ENCODE measurements at regions of chr6 and their contacts with region 1.

Region 1: GRCh38 chr6:137799950-137800568 is 67.0 kb upstream of the TNFAIP3 start:
- DNase-seq: peak; percentile 40 to 93 (median 72)
- ATAC-seq: peak; percentile 83
- H3K4me3 ChIP-seq: no peak overlapping the region
- H3K4me3 Mint-ChIP-seq: no peak overlapping the region
- H3K27ac ChIP-seq: peak overlapping the region in 1 of 2 experiments; percentile 4
- H3K27ac Mint-ChIP-seq: peak overlapping the region; percentile 56
- H3K4me1 ChIP-seq: peaks cover 47% of the 10 kb centered on the region
- H3K4me1 Mint-ChIP-seq: peaks cover 53% of the 10 kb centered on the region
- H3K27me3 ChIP-seq: no peaks in the 10 kb centered on the region
- H3K27me3 Mint-ChIP-seq: no peaks in the 10 kb centered on the region
- CTCF ChIP-seq: peak; percentile 68

Region 2: DNA sequence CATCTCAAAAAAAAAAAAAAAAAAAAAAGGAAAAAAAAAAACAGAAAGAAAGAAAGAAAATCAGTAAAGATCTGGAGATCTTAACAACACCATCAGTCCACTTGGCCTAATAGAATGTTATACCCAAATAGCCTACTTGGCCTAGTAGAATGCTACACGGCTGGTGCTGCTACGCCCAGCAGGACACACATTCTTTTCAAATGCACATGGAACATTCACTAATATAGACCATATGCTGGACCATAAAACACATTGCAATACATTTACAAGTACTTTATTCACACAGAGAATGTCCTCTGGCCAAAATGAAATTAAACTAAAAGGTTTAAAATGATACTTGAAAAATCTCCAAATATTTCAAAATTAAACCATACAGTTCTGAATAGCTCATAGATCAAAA is 13.0 kb before region 1 on chr6:
- CTCF ChIA-PET with region 1: interaction called, 10 read pairs
- POLR2A ChIA-PET with region 1: interaction called, 3 read pairs
- intact Hi-C with region 1: no loop called
- DNase-seq: no peak
- ATAC-seq: no peak
- H3K4me3 ChIP-seq: no peak overlapping the region
- H3K4me3 Mint-ChIP-seq: no peak overlapping the region
- H3K27ac ChIP-seq: no peak overlapping the region
- H3K27ac Mint-ChIP-seq: no peak overlapping the region
- H3K4me1 ChIP-seq: peaks cover 9% of the 10 kb centered on the region
- H3K4me1 Mint-ChIP-seq: peaks cover 19% of the 10 kb centered on the region
- H3K27me3 ChIP-seq: no peaks in the 10 kb centered on the region
- H3K27me3 Mint-ChIP-seq: no peaks in the 10 kb centered on the region
- CTCF ChIP-seq: no peak

Region 3: GRCh38 chr6:137823826-137824555 is 23.9 kb after region 1 on chr6:
- CTCF ChIA-PET with region 1: interaction called, 8 read pairs
- POLR2A ChIA-PET with region 1: interaction called, 4 read pairs
- intact Hi-C with region 1: loop called (anchors 1 to 2 kb)
- DNase-seq: peak; percentile 54 to 98 (median 82)
- ATAC-seq: peak; percentile 71
- H3K4me3 ChIP-seq: peak overlapping the region; percentile 1 to 39
- H3K4me3 Mint-ChIP-seq: peak overlapping the region; percentile 59
- H3K27ac ChIP-seq: peak overlapping the region; percentile 91 to 99
- H3K27ac Mint-ChIP-seq: peak overlapping the region; percentile 97
- H3K4me1 ChIP-seq: peaks cover 75% of the 10 kb centered on the region
- H3K4me1 Mint-ChIP-seq: peaks cover 74% of the 10 kb centered on the region
- H3K27me3 ChIP-seq: no peaks in the 10 kb centered on the region
- H3K27me3 Mint-ChIP-seq: no peaks in the 10 kb centered on the region
- CTCF ChIP-seq: no peak

Region 4: GRCh38 chr6:137944793-137945498 is 144.9 kb after region 1 on chr6:
- CTCF ChIA-PET with region 1: interaction called, 47 read pairs
- POLR2A ChIA-PET with region 1: interaction called, 5 read pairs
- intact Hi-C with region 1: loop called (anchors 1 to 5 kb)
- DNase-seq: peak in 3 of 9 experiments; percentile 20 to 69 (median 53)
- ATAC-seq: peak; percentile 68
- H3K4me3 ChIP-seq: no peak overlapping the region
- H3K4me3 Mint-ChIP-seq: no peak overlapping the region
- H3K27ac ChIP-seq: no peak overlapping the region
- H3K27ac Mint-ChIP-seq: no peak overlapping the region
- H3K4me1 ChIP-seq: peaks cover 18% of the 10 kb centered on the region
- H3K4me1 Mint-ChIP-seq: peaks cover 22% of the 10 kb centered on the region
- H3K27me3 ChIP-seq: no peaks in the 10 kb centered on the region
- H3K27me3 Mint-ChIP-seq: no peaks in the 10 kb centered on the region
- CTCF ChIP-seq: peak; percentile 72

Region 5: DNA sequence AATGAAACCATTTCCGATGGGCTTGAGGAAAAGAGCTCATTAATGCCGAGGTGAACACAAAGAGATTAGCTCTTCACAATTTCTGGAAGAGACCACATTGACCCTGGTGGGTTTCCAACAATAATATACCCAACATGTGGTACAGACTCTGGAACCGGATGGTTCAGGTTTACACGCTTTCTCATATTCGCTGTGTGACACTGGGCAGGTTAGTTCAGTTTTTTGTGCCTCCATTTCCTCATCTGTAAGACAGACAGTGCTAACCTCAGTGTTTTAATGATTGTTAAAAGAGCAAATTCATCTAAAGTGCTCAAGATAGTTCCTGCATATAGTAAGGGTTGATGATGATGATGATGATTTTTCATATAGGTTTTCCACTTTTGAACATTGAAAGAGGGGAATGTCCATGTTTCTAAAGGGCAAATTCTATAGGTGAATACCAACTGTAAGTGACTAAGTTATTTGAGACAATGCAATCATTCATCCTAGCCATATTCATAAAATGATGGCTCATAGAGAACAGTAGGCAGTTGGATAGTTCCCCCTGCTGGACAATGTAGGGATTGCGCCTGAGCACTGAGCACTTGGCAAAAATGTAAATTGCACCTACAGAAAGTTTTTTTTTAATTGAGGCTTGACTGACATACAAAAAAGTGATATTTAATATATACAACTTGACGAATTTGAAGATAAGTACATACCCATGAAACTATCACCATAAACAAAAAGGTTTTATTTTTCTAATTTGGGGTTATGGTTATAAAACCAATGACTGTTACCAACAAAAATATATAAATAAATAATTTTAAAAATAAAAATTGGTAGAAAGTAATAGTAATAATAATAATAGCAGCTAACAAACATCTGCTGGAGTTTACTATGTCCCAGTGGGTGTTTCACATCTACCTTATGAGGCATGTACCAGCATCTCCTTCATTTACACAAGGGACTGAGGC is 309.3 kb after region 1 on chr6:
- CTCF ChIA-PET with region 1: no interaction called
- POLR2A ChIA-PET with region 1: no interaction called
- intact Hi-C with region 1: loop called (anchors 1 to 10 kb)
- DNase-seq: peak; percentile 61 to 85 (median 81)
- ATAC-seq: peak; percentile 71
- H3K4me3 ChIP-seq: no peak overlapping the region
- H3K4me3 Mint-ChIP-seq: no peak overlapping the region
- H3K27ac ChIP-seq: no peak overlapping the region
- H3K27ac Mint-ChIP-seq: no peak overlapping the region
- H3K4me1 ChIP-seq: peaks cover 9% of the 10 kb centered on the region
- H3K4me1 Mint-ChIP-seq: peaks cover 18% of the 10 kb centered on the region
- H3K27me3 ChIP-seq: peaks cover 5 to 7% of the 10 kb centered on the region in 2 experiments
- H3K27me3 Mint-ChIP-seq: peaks cover 25% of the 10 kb centered on the region
- CTCF ChIP-seq: peak; percentile 92